ENCODE measurements at regions of chr11 and their contacts with region 1.

Region 1: DNA sequence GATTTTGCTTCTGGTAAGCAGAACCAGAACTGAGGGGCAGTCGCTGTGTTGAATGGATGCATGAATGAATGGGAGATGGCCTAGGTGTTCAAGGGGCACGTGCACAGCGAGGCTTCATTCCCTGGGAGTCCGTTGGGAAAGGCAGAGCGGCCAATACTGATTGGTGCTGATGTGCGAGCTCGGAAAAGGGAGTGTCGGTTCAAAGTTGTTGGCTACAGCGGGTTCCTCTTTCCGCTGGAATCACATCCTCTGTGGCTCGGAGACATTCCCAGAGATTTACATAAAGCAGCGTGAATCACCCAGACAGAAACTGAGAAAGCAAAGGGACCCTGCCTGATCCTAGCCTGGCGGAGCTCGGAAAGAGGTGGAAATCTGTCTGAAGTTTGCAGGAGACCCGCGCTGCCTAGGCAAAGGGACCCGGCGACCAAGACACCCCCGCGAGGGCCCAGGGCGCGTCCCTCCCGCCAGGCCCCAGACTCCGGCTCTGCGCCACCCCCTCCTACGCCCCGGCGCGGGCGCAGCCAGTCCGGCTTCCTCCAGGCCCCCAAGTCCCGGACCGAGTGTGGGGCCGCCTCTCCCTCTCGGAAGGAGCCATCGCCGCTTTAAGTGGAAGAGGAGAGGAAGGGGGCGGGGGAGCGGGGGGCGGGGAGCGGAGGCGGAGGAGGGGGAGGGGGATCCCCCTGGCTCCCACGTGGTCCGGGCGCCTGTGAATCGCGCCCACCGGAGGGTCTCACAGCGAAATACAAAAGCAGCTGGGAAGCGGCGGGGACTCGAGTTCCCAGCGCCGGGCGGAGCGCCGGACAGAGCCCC is at the start of gene FJX1:
- DNase-seq: peak; percentile 57 to 61
- ATAC-seq: peak; percentile 70 to 82 (median 78)
- H3K4me3 ChIP-seq: peak within 1 kb of the TSS; percentile 51 to 79 (median 62)
- H3K27ac ChIP-seq: peak within 1 kb of the TSS; percentile 53 to 92 (median 83)
- H3K4me1 ChIP-seq: peaks cover 4 to 53% (median 25%) of the 10 kb centered on the region in 9 donors
- H3K27me3 ChIP-seq: peaks cover 0 to 94% (median 19%) of the 10 kb centered on the region in 7 donors
- CTCF ChIP-seq: no peak
- total RNA-seq, gene FJX1: 0.57 to 4.7 (median 1.3) TPM

Region 2: GRCh38 chr11:35525501-35526175 is 92.3 kb before region 1 on chr11 and contains the start of gene PAMR1:
- intact Hi-C with region 1: no loop called
- DNase-seq: peak; percentile 34 to 55
- ATAC-seq: peak; percentile 70 to 94 (median 91)
- H3K4me3 ChIP-seq: peak within 1 kb of the TSS in 9 of 10 donors; percentile 17 to 52 (median 43)
- H3K27ac ChIP-seq: peak within 1 kb of the TSS in 6 of 10 donors; percentile 9 to 67 (median 50)
- H3K4me1 ChIP-seq: peaks cover 0 to 22% (median 4%) of the 10 kb centered on the region in 9 donors
- H3K27me3 ChIP-seq: peaks cover 3 to 82% (median 40%) of the 10 kb centered on the region in 7 donors
- CTCF ChIP-seq: no peak
- total RNA-seq, gene PAMR1: 2.7 to 13.8 (median 5.7) TPM

Region 3: DNA sequence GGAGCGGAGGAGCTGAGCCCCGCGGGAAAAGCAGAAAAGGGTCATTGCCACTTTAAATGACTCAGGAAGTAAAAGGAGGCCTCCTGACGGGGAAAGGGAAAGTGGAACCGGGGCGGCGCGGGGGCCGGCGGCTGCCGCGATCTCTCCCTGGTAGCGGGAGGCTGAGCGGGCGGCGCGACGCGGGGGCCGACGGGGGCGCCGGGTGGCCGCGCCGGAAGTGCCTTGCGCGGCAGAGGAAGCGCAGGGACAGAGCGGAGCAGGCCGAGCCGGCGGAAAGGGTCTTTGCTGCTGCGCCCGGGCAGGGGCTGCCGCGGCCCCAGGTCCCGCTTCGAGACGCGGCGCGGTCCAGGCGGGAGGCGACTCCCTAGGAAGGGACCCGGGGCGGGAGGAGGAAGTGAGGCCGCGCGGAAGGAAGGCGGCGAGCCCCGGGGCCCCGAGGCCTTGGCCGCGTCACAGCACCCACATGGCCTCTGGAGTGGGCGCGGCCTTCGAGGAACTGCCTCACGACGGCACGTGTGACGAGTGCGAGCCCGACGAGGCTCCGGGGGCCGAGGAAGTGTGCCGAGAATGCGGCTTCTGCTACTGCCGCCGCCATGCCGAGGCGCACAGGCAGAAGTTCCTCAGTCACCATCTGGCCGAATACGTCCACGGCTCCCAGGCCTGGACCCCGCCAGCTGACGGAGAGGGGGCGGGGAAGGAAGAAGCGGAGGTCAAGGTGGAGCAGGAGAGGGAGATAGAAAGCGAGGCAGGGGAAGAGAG is 44.9 kb after region 1 on chr11 and contains the start of gene TRIM44:
- intact Hi-C with region 1: loop called in 6 of 10 experiments (anchors 1 to 5 kb)
- DNase-seq: peak; percentile 87 to 88
- ATAC-seq: peak; percentile 93 to 97 (median 96)
- H3K4me3 ChIP-seq: peak within 1 kb of the TSS; percentile 52 to 93 (median 76)
- H3K27ac ChIP-seq: peak within 1 kb of the TSS; percentile 88 to 99 (median 96)
- H3K4me1 ChIP-seq: peaks cover 0 to 30% (median 19%) of the 10 kb centered on the region in 9 donors
- H3K27me3 ChIP-seq: peaks cover 0 to 2% (median 0%) of the 10 kb centered on the region in 7 donors
- CTCF ChIP-seq: no peak
- total RNA-seq, gene TRIM44: 37.7 to 59.2 (median 46.8) TPM

Region 4: DNA sequence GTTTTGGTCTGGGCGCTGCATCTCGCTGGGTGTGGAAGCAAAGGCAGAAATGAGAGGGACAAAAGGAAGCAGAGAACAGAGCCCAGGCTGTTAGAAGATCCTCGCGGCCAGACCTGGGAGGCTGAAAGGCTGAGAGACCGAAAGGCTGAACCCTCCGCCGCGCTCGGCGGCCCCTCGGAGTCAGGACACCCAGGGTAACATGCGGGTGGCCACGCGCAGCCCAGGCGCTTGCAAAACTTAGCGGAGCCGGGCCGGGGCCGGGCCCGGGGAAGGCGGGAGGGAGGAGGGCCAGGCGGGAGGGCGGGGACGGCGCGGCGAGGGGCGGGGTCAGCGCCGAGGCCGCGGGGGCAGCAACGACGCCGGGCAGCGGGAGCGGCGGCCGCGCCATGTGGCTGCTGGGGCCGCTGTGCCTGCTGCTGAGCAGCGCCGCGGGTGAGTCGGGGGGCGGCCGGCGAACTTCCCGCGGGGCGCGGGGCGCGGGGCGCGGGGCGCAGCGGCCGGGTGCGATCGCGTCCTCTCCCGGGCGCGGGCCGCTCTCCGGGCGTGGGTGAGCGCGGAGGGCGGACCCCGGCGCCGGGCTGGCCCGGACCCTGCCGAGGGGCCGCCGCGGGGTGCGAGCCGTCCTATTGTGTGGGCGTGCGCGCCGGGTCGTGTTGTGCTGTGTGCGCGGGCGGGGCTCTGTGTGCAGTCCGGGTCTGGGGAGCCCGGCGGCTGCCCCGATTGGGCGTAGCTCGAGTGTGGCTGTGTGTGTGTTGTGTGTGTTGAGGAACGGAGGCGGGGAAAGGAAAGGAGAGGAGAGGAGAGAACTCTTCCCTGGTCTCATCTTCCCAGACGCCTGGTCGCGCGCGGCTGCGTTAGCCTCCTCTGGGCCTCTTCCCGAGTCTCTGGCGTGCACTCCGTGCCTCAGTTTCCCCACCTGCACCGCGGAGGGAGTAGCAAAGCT is 326.1 kb after region 1 on chr11 and contains the start of gene LDLRAD3:
- intact Hi-C with region 1: loop called in 2 of 10 experiments (anchors 10 kb)
- DNase-seq: peak; percentile 60 to 84
- ATAC-seq: peak; percentile 86 to 95 (median 92)
- H3K4me3 ChIP-seq: peak within 1 kb of the TSS; percentile 36 to 69 (median 61)
- H3K27ac ChIP-seq: peak within 1 kb of the TSS in 9 of 10 donors; percentile 15 to 85 (median 53)
- H3K4me1 ChIP-seq: peaks cover 0 to 23% (median 17%) of the 10 kb centered on the region in 9 donors
- H3K27me3 ChIP-seq: peaks cover 0 to 15% (median 0%) of the 10 kb centered on the region in 7 donors
- CTCF ChIP-seq: no peak
- total RNA-seq, gene LDLRAD3: 0.87 to 5.1 (median 1.7) TPM

Region 5: GRCh38 chr11:36056160-36056751 is 438.4 kb after region 1 on chr11:
- intact Hi-C with region 1: loop called in 1 of 10 experiments (anchors 5 kb)
- DNase-seq: no peak
- ATAC-seq: peak in 1 of 8 donors; percentile 27
- H3K4me3 ChIP-seq: no peak overlapping the region
- H3K27ac ChIP-seq: peak overlapping the region in 1 of 10 donors; percentile 71
- H3K4me1 ChIP-seq: peaks cover 0 to 30% (median 10%) of the 10 kb centered on the region in 9 donors
- H3K27me3 ChIP-seq: peaks cover 0 to 2% (median 0%) of the 10 kb centered on the region in 7 donors
- CTCF ChIP-seq: peak in 7 of 9 donors; percentile 30 to 48 (median 38)

Region 6: DNA sequence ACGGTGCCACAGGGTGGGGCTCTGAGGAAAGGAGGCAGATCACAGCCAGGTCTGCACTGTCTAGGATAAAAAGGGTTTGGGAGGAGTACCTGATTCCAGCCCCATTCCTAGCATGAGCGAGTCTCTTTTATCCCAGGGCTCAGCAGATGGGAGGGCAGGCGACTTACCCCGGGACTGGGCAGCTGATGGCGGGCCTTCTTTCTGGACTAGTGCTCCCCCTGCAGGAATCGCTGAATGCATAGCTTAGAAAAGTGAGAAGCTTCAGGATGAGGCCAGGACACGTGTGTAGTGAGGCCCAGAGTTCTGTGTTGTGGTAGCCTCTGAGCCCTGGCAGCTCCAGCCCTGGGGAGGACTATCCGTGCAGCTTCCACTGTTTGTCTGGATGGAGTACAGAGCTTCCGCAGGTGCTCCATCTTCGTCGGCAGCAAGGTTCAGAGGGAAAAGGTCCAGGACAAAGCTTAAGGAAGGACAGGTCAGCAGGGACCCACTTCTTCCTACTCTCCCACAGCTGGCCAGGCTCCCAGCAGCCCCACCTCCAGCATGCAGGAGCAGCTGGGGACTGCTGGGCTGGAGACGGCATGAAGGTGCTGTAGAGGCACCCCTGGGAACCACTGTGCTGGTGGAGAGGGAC is 641.0 kb after region 1 on chr11:
- intact Hi-C with region 1: loop called in 3 of 10 experiments (anchors 2 to 5 kb)
- DNase-seq: peak; percentile 31 to 44
- ATAC-seq: peak; percentile 74 to 88 (median 85)
- H3K4me3 ChIP-seq: no peak overlapping the region
- H3K27ac ChIP-seq: no peak overlapping the region
- H3K4me1 ChIP-seq: peaks cover 0 to 9% (median 0%) of the 10 kb centered on the region in 9 donors
- H3K27me3 ChIP-seq: peaks cover 0 to 33% (median 7%) of the 10 kb centered on the region in 7 donors
- CTCF ChIP-seq: peak; percentile 19 to 71 (median 63)

Region 7: DNA sequence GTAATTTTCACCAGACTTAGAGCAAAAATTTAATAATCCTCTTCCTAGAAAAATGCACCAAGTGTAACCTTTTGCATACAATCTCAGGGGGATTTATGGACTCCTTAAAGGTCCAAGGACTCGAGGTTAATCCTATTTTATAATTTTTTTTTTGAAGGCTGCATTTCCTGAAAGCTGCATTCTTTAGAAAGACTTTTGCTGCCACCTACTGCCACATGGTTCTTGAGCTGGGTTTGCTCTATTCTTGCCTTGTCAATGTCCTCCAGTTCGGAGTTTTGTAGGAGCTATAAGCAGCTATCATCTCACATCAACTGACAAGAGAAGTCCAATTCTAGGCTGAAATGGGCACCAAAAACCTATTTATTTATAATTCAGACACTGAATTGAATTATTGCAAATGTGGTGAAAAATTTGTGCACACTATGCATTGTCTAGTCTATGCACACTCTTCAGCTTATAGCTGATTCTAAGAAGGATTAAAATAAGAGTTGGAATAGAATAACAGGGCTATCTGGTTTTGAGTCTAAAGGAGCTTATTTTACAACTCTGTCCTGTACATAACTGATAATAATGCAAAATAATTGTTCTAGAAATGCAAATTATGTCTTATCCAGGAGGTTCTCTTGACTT is 860.9 kb after region 1 on chr11:
- intact Hi-C with region 1: loop called in 4 of 10 experiments (anchors 10 kb)
- DNase-seq: peak in 1 of 2 donors; percentile 62
- ATAC-seq: peak; percentile 28 to 83 (median 68)
- H3K4me3 ChIP-seq: no peak overlapping the region
- H3K27ac ChIP-seq: no peak overlapping the region
- H3K4me1 ChIP-seq: peaks cover 0 to 29% (median 0%) of the 10 kb centered on the region in 9 donors
- H3K27me3 ChIP-seq: no peaks in the 10 kb centered on the region
- CTCF ChIP-seq: peak; percentile 13 to 84 (median 64)

Measured in heart right ventricle (tissue), 16 donors.